Activated naive CD4-positive, alpha-beta T cell treated with anti-CD3 and anti-CD28 coated beads for 36 hours (primary cell): ENCODE measurements at regions of chr1 and their contacts with region 1.

Region 1: DNA sequence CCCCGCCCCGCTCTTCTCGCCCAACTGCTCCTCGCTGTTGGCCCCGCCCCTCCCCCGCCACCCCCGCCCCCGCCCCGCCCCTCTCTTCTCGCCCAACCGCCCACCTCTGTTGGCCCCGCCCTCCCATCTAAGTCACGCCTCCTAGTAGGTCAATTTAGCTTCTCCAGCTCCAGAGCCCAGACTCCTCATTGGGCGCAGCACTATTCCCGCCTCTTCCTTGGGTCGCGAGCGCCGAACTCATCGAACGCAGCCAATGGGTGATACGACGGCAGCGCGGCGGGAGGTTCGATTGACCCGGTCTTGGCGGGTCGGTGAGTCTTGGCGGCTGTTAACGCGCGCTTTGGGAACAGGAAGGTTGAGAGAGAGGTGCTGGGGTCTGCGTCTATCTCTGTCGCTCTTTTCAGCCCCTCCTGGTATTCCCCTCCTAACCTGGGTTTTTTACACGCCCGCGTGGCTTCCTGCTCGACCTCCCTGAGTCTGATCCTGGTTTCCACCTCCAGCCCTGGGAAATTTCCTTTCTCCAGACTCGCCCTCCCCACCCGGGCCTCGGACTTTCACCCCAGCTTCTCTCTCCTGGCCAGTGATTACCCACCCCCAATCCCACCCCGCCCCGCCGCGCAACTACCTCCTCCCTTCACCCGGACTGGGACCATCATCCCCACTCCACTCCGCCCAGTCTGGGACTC is at the start of gene RAD54L:
- DNase-seq: peak; percentile 99
- H3K4me3 Mint-ChIP-seq: peak within 1 kb of the TSS; percentile 99
- H3K27ac Mint-ChIP-seq: peak within 1 kb of the TSS; percentile 92
- H3K4me1 Mint-ChIP-seq: peaks cover 23% of the 10 kb centered on the region
- H3K27me3 Mint-ChIP-seq: no peaks in the 10 kb centered on the region
- total RNA-seq, gene RAD54L: 83.9 to 88.0 TPM

Region 2: GRCh38 chr1:45521398-45522323 is 725.9 kb before region 1 on chr1 and contains the start of gene PRDX1:
- CTCF ChIA-PET with region 1: no interaction called
- intact Hi-C with region 1: loop called (anchors 10 kb)
- DNase-seq: peak; percentile 96
- H3K4me3 Mint-ChIP-seq: peak within 1 kb of the TSS; percentile 93
- H3K27ac Mint-ChIP-seq: peak within 1 kb of the TSS; percentile 88
- H3K4me1 Mint-ChIP-seq: peaks cover 46% of the 10 kb centered on the region
- H3K27me3 Mint-ChIP-seq: no peaks in the 10 kb centered on the region
- total RNA-seq, gene PRDX1: 596 to 641 TPM

Region 3: GRCh38 chr1:46132529-46133180 is 114.9 kb before region 1 on chr1 and contains the start of gene PIK3R3:
- CTCF ChIA-PET with region 1: no interaction called
- intact Hi-C with region 1: loop called (anchors 2 kb)
- DNase-seq: peak; percentile 90
- H3K4me3 Mint-ChIP-seq: peak within 1 kb of the TSS; percentile 84
- H3K27ac Mint-ChIP-seq: peak within 1 kb of the TSS; percentile 56
- H3K4me1 Mint-ChIP-seq: peaks cover 19% of the 10 kb centered on the region
- H3K27me3 Mint-ChIP-seq: peaks cover 50% of the 10 kb centered on the region
- total RNA-seq, gene PIK3R3: 0.45 to 0.49 TPM

Region 4: GRCh38 chr1:46223472-46223943 is 24.1 kb before region 1 on chr1:
- CTCF ChIA-PET with region 1: interaction called, 16 read pairs
- intact Hi-C with region 1: no loop called
- DNase-seq: peak; percentile 80
- H3K4me3 Mint-ChIP-seq: no peak overlapping the region
- H3K27ac Mint-ChIP-seq: no peak overlapping the region
- H3K4me1 Mint-ChIP-seq: peaks cover 2% of the 10 kb centered on the region
- H3K27me3 Mint-ChIP-seq: no peaks in the 10 kb centered on the region

Region 5: GRCh38 chr1:46285730-46286477 is 38.3 kb after region 1 on chr1:
- CTCF ChIA-PET with region 1: no interaction called
- intact Hi-C with region 1: loop called (anchors 5 kb)
- DNase-seq: peak; percentile 85
- H3K4me3 Mint-ChIP-seq: no peak overlapping the region
- H3K27ac Mint-ChIP-seq: peak overlapping the region; percentile 79
- H3K4me1 Mint-ChIP-seq: peaks cover 14% of the 10 kb centered on the region
- H3K27me3 Mint-ChIP-seq: no peaks in the 10 kb centered on the region

Region 6: DNA sequence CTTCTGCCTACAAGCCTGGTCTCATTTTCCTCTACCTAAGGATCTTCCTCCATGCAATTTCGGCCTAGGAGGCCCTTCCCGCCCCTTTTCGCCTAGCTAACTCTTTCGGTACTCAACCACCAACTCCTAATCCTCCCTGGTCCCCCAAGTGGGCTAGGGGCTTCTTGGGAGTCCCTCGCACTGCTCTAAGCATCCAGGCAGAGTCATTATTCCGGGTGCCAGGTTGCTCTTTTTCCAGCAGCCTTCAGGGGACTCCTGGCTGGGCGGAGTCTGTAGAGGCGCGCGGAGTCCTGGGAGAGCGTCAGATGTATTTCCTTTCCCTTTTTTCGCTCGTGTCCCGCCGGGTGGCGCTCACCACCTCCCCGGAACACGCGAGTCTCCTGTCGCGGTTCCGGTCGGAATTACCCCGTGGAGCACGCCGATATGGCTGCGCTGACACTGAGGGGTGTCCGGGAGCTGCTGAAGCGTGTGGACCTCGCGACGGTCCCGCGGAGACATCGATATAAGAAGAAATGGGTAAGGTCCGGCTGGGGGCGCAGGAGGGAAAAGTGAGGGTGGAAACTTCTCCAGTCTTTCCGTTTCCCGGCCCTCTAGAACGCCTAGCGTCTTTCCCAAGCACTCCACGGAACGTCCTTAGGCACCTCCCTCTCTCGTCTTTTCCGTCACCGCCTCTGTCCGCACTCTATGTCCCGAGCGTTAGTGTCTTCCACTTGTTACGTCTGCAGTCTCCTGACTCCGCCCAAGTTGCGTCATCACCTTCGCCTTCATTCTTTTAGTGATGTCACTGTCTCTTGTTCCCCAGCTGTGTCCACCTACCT is 93.0 kb after region 1 on chr1 and contains the start of gene NSUN4:
- CTCF ChIA-PET with region 1: interaction called, 5 read pairs
- intact Hi-C with region 1: loop called (anchors 1 kb)
- DNase-seq: peak; percentile 95
- H3K4me3 Mint-ChIP-seq: peak within 1 kb of the TSS; percentile 99
- H3K27ac Mint-ChIP-seq: peak within 1 kb of the TSS; percentile 100
- H3K4me1 Mint-ChIP-seq: peaks cover 51% of the 10 kb centered on the region
- H3K27me3 Mint-ChIP-seq: no peaks in the 10 kb centered on the region
- total RNA-seq, gene NSUN4: 33.6 to 37.8 TPM